K562 (cell line): ENCODE measurements at regions of chr15 and their contacts with region 1.

Region 1: GRCh38 chr15:101277038-101277882 is at the start of gene SELENOS:
- DNase-seq: peak; percentile 91 to 94 (median 92)
- ATAC-seq: peak; percentile 98
- H3K4me3 ChIP-seq: peak within 1 kb of the TSS; percentile 98
- H3K27ac ChIP-seq: peak within 1 kb of the TSS; percentile 72
- H3K4me1 ChIP-seq: peaks cover 6 to 10% of the 10 kb centered on the region in 2 experiments; a peak in 4 of 5 replicates
- H3K27me3 ChIP-seq: no peaks in the 10 kb centered on the region
- CTCF ChIP-seq: no peak
- EP300 ChIP-seq: no peak
- POLR2A ChIP-seq: peak; percentile 73
- RAD21 ChIP-seq: no peak
- polyA plus RNA-seq, gene SELENOS: 24.9 to 36.6 TPM

Region 2: GRCh38 chr15:101014921-101015841 is 262.1 kb before region 1 on chr15:
- CTCF ChIA-PET with region 1: no interaction called
- POLR2A ChIA-PET with region 1: interaction called, 3 read pairs
- in situ Hi-C with region 1: no loop called
- intact Hi-C with region 1: loop called (anchors 5 kb)
- DNase-seq: peak; percentile 80 to 82 (median 82)
- ATAC-seq: peak; percentile 89
- H3K4me3 ChIP-seq: no peak overlapping the region
- H3K27ac ChIP-seq: no peak overlapping the region
- H3K4me1 ChIP-seq: peaks cover 0 to 11% of the 10 kb centered on the region in 2 experiments; a peak in 3 of 5 replicates
- H3K27me3 ChIP-seq: peaks cover 8 to 30% of the 10 kb centered on the region in 2 experiments; a peak in 4 of 5 replicates
- CTCF ChIP-seq: peak; percentile 87 to 93 (median 92)
- EP300 ChIP-seq: no peak
- POLR2A ChIP-seq: no peak
- RAD21 ChIP-seq: peak; percentile 89 to 94

Region 3: GRCh38 chr15:101348643-101349548 is 71.6 kb after region 1 on chr15:
- CTCF ChIA-PET with region 1: no interaction called
- POLR2A ChIA-PET with region 1: no interaction called
- in situ Hi-C with region 1: no loop called
- intact Hi-C with region 1: no loop called
- DNase-seq: no peak
- ATAC-seq: no peak
- H3K4me3 ChIP-seq: no peak overlapping the region
- H3K27ac ChIP-seq: no peak overlapping the region
- H3K4me1 ChIP-seq: no peaks in the 10 kb centered on the region; a peak in 1 of 5 replicates
- H3K27me3 ChIP-seq: peaks cover 0 to 24% of the 10 kb centered on the region in 2 experiments; a peak in 2 of 5 replicates
- CTCF ChIP-seq: no peak
- EP300 ChIP-seq: no peak
- POLR2A ChIP-seq: no peak
- RAD21 ChIP-seq: no peak